Cardiac septum (tissue), 1 donor: ENCODE measurements at regions of chr4 and their contacts with region 1.

Region 1: GRCh38 chr4:76148142-76148865 is at the start of gene NUP54:
- DNase-seq: peak; percentile 96
- total RNA-seq, gene NUP54: 22.7 TPM

Region 2: DNA sequence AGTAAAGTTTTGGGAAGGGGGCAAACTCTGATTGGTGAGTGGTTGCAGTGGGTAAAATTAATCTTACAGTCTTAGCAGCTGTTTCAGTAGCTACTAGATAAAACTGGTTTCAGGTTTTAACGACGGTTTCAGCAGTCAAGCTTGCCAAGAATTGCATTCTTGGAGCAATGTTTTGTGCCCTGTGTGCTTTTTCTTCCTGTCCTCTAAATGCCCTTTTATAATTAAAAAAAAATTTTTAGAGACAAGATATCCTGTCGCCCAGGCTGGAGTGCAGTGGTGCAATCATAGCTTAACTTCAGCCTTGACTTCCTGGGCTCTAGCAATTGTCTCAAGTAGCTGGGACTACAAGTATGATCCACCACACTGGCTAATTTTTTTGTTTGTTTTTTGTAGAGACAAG is 239.7 kb before region 1 on chr4:
- intact Hi-C with region 1: no loop called
- DNase-seq: no peak

Region 3: DNA sequence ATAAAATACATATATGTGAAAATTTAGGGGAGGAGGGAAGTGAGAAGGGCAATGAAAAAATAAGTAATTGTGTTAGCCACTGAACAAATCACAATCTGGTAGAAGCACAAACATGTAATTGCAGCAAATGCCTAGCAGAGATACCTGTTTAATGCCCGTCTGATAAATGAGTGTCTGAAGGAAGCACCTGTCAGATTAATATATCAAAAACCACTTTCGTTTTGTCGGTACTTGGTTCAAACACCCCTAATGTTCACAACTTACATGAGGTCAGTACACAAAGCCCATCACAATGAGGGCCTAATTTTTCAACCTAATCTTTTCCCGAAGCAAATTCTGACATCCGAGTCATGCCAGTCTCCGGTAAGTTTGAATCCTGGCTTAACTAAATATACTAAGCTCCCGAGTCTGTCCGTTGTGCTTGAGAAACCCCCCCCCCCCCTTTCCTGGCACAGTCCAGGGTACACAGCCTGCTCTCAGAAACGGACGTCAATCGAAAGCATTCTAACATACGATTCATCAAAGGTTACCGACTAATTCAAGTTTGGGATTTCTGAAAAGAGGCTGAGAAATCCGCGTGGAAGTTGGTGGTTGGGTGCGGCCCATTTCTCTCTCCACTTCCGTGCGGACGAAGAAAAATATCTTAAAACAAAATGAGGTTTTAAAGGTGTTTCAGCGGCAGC is 158.3 kb before region 1 on chr4:
- intact Hi-C with region 1: loop called (anchors 2 kb)
- DNase-seq: no peak

Region 4: GRCh38 chr4:76213415-76214176 is 65.3 kb after region 1 on chr4 and contains the start of gene SCARB2:
- intact Hi-C with region 1: loop called (anchors 5 kb)
- DNase-seq: peak; percentile 94
- total RNA-seq, gene SCARB2: 114 TPM

Region 5: DNA sequence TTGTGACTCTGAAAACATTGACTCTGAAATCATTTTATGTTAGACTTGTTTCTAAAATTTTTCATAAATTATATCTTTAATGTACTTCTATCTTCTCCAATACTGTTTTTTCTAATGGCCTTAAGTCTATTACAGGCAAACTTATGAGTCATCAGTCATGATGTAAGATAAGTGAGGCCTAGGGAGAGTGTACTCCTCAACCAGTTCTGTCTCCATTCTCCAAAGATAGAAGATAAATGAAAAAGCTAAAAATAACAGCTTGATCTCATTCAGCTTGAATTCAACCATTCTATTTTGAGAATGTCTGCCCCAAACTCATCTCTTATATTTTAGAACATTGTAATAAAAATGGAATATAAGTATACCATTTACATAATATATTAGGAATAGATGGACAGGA is 192.8 kb after region 1 on chr4:
- intact Hi-C with region 1: no loop called
- DNase-seq: no peak